ENCODE measurements at regions of chr6 and their contacts with region 1.

Region 1: DNA sequence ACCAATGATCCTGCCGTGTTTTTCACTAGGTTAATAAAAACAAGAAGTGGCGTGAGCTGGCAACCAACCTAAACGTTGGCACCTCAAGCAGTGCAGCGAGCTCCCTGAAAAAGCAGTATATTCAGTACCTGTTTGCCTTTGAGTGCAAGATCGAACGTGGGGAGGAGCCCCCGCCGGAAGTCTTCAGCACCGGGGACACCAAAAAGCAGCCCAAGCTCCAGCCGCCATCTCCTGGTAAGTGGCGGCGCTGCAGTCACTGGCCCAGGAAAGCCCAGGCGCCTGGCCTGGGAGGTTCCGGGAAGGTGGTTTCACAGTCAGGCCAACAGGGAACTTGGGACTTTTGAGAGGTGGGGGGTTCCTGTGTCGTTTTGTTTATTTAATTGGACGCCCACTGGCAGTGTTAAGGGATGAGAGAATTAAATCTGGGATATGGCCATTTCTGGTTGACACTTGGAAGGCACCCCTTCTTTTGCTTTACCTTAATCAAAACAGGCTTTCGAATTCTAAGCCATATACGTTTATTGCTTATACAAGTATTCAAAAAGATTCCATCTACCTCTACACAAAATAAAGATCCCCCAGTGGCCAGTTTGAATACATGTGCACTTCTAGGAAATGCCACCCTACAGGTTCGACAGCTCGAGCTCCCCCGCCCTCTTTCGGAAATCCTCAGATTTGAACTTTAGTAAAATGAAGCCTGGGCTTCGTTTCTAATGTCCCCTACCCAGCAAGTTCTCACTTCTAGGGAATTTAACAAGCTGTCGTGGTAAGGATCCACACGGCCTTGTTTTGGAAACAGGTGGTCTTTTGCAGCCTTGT is 138.9 kb downstream of the TMEM242 start:
- DNase-seq: peak; percentile 58 to 79 (median 73)
- ATAC-seq: peak; percentile 23 to 81 (median 76)
- H3K4me3 ChIP-seq: peak overlapping the region in 2 of 12 donors; percentile 35 to 41
- H3K27ac ChIP-seq: no peak overlapping the region
- H3K4me1 ChIP-seq: peaks cover 0 to 38% (median 14%) of the 10 kb centered on the region in 12 donors
- H3K27me3 ChIP-seq: no peaks in the 10 kb centered on the region
- CTCF ChIP-seq: peak; percentile 69 to 95 (median 90)
- POLR2A ChIP-seq: no peak

Region 2: DNA sequence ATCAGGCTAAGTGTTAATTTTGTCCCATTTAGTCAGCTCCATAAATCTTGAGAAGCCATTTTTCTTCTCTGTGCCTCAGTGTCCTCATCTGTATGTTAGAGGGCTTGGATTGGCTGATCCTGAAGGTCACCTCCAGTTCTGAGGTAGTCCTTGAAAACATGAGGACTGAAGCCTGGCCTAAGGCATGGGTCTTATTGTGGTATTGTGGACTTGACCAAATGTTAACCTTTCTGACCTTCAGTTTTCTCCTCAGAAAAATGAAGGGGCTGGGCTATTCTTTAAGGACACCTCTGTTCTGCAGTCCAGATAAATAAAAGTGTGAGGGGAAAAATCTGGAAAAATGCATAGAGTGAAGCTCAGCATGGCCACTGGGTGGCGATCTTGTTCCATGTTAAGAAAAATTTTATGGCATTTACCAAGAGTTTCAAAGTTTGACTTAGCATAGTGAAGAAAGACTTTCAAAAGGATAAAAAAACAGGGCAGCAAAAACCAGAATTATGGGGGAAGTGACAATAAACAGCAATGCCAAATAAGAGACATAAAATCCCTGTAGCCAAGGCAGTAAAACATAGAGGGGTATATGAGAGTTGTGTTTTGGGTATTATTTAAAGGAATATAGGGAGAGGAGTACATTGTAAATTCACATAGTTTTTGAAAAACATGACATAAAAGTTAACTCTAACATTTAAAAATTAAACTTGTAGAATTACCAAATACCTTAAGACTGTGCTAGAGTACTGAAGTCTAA is 1856.9 kb before region 1 on chr6:
- intact Hi-C with region 1: loop called in 2 of 10 experiments (anchors 5 to 10 kb)
- DNase-seq: peak in 2 of 5 donors; percentile 30 to 45
- ATAC-seq: peak in 1 of 4 donors; percentile 69
- H3K4me3 ChIP-seq: no peak overlapping the region
- H3K27ac ChIP-seq: no peak overlapping the region
- H3K4me1 ChIP-seq: no peaks in the 10 kb centered on the region
- H3K27me3 ChIP-seq: no peaks in the 10 kb centered on the region
- CTCF ChIP-seq: peak; percentile 71 to 89 (median 80)
- POLR2A ChIP-seq: no peak

Region 3: DNA sequence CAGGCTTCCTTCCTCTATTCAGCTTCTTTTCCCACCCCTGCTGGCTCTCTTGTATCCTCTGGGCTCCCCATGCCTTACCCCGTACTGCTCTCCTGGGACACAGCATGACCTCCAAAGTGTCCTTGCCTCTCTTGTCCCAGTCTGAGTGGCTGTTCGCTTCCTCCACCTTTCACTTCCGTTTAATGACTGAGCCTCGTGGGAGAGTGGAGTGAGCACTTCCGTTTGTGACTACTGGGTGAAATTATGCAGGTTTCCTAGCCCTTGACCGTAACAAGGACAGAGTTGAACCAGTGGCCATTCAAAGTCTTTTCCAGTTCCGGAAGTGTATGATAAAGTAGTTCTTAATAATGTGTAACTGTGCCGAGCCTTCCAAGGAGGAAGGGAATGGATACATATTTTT is 298.0 kb before region 1 on chr6:
- intact Hi-C with region 1: loop called in 1 of 10 experiments (anchors 10 kb)
- DNase-seq: peak in 3 of 5 donors; percentile 42 to 54 (median 45)
- ATAC-seq: peak; percentile 29 to 72 (median 66)
- H3K4me3 ChIP-seq: no peak overlapping the region
- H3K27ac ChIP-seq: peak overlapping the region in 11 of 12 donors; percentile 6 to 54 (median 30)
- H3K4me1 ChIP-seq: peaks cover 8 to 93% (median 75%) of the 10 kb centered on the region in 12 donors
- H3K27me3 ChIP-seq: no peaks in the 10 kb centered on the region
- CTCF ChIP-seq: no peak
- POLR2A ChIP-seq: no peak

Region 4: DNA sequence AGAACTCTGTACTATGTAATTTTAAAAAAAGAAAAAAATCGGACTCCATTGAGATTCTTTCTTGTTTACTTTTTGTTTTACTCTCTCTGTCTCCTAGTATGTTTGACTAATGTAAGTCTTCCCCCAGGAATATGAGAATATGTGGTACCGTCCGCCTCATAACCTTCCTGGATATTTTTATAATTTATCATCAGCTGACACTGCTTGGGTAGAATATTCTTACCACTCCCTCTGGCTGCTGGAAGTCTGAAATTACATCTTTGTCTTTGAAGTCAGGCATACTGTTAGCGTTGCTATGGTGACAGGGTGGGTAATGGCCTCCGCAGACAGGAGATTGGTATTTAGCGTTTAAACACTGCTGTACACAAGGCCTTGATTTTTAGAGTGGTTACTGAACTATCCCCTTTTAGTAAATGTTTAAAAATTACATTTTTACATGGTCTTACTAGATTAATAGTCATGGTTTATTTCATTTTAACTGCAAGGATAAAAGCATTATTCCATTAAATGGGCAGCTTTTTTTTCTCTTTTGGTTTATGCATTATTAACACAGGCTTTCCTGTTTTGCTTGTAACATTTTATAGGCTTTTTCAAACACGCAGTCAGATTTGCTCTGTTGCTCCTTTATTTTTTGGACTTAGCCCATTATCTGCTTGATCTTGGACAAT is 230.8 kb before region 1 on chr6:
- intact Hi-C with region 1: loop called in 1 of 10 experiments (anchors 5 kb)
- DNase-seq: peak in 2 of 5 donors; percentile 47 to 62
- ATAC-seq: peak; percentile 57 to 80 (median 71)
- H3K4me3 ChIP-seq: peak overlapping the region in 7 of 12 donors; percentile 6 to 39 (median 29)
- H3K27ac ChIP-seq: peak overlapping the region in 11 of 12 donors; percentile 27 to 76 (median 53)
- H3K4me1 ChIP-seq: peaks cover 13 to 88% (median 66%) of the 10 kb centered on the region in 12 donors
- H3K27me3 ChIP-seq: no peaks in the 10 kb centered on the region
- CTCF ChIP-seq: peak in 10 of 12 donors; percentile 24 to 66 (median 50)
- POLR2A ChIP-seq: no peak

Region 5: DNA sequence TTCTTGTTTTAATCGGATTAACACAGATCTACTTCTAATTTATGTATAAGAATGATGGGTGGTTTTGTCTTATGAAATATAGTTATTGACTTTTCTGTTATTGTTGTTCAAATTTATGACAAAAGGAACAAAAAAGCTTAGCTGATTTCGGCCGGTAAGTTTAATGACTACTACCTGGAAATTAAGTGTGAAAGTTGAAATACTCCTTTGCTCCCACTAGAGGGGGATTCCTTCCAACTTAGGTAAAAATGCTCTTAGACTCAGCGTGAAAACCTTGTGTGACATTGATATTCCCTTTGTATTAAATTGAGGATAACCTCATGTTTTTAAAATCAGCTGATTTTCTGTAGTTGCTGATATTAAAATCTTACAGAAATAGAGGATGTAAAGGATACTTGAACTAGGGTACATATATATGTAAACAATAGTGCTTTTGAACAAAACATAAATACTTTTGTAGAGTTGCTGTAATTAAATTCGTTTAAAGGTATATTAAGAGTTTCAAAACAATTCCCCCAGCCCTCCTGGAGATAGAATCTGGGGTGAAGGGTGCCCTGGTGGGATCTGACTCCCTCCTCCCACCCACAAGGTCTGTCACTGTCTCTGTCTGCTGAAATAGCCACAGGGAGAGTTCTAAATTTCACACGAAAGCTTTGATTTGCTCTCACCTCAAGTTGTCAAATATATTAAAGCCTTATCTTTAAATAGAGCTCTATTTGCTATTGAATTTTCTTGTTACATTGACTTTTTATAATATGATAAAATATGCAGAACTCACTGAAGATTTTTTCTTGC is 149.8 kb before region 1 on chr6:
- intact Hi-C with region 1: loop called (anchors 5 to 10 kb)
- DNase-seq: no peak
- ATAC-seq: peak in 3 of 4 donors; percentile 47 to 68 (median 66)
- H3K4me3 ChIP-seq: no peak overlapping the region
- H3K27ac ChIP-seq: no peak overlapping the region
- H3K4me1 ChIP-seq: peaks cover 0 to 54% (median 39%) of the 10 kb centered on the region in 12 donors
- H3K27me3 ChIP-seq: no peaks in the 10 kb centered on the region
- CTCF ChIP-seq: peak; percentile 45 to 75 (median 58)
- POLR2A ChIP-seq: no peak

Region 6: DNA sequence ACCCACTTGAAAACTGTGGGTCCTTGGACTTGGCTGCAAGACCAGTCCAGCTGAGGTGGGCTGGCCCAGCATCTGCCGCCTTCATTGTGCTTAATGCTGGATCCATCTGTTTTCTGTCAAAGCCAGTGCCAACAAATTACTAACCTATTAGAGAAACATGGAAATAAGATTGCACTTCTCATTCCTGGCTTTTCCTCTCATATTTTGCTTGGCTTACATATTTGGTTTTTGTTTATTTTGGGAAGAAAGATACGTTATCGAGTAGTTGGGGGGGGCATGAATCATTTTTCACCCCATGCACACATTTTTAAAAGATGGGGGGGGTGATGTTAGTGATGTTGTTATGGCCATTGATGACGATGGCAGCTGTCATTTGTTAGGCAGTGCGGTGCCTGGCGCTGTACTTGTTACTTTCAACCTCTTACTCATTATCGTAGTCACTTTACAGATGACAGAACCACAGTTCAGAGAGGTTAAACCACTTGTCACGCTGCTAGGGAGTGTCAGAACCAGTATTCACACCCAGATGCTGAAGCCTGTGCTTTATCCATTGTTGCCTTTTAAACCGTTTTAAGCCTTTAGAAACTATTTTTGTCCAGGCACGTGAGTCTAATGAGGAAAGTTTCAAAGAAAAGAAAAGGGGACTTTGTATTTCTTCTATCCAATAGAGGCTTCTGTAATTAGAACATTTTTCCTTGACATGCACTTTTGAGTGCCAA is 41.1 kb before region 1 on chr6:
- intact Hi-C with region 1: loop called in 1 of 10 experiments (anchors 5 kb)
- DNase-seq: peak in 2 of 5 donors; percentile 67 to 79
- ATAC-seq: peak; percentile 58 to 91 (median 82)
- H3K4me3 ChIP-seq: no peak overlapping the region
- H3K27ac ChIP-seq: peak overlapping the region in 11 of 12 donors; percentile 31 to 69 (median 61)
- H3K4me1 ChIP-seq: peaks cover 3 to 46% (median 41%) of the 10 kb centered on the region in 12 donors
- H3K27me3 ChIP-seq: no peaks in the 10 kb centered on the region
- CTCF ChIP-seq: no peak
- POLR2A ChIP-seq: no peak

Region 7: GRCh38 chr6:158231551-158232315 is 1047.3 kb after region 1 on chr6:
- intact Hi-C with region 1: no loop called
- DNase-seq: peak; percentile 75 to 88 (median 78)
- ATAC-seq: peak; percentile 52 to 84 (median 72)
- H3K4me3 ChIP-seq: peak overlapping the region; percentile 54 to 95 (median 77)
- H3K27ac ChIP-seq: peak overlapping the region; percentile 63 to 92 (median 82)
- H3K4me1 ChIP-seq: peaks cover 0 to 22% (median 15%) of the 10 kb centered on the region in 12 donors
- H3K27me3 ChIP-seq: no peaks in the 10 kb centered on the region
- CTCF ChIP-seq: no peak
- POLR2A ChIP-seq: no peak